ENCODE measurements at regions of chr2 and their contacts with region 1.

Region 1: GRCh38 chr2:135004005-135004746 is 43.1 kb downstream of the MAP3K19 start:
- DNase-seq: peak; percentile 85
- ATAC-seq: peak; percentile 99
- H3K4me3 ChIP-seq: no peak overlapping the region
- H3K27ac ChIP-seq: no peak overlapping the region
- H3K4me1 ChIP-seq: peaks cover 7% of the 10 kb centered on the region
- H3K27me3 ChIP-seq: peaks cover 9% of the 10 kb centered on the region
- CTCF ChIP-seq: peak; percentile 94

Region 2: GRCh38 chr2:134943540-134943939 is 60.6 kb before region 1 on chr2:
- intact Hi-C with region 1: no loop called
- DNase-seq: no peak
- ATAC-seq: peak; percentile 43
- H3K4me3 ChIP-seq: no peak overlapping the region
- H3K27ac ChIP-seq: no peak overlapping the region
- H3K4me1 ChIP-seq: no peaks in the 10 kb centered on the region
- H3K27me3 ChIP-seq: no peaks in the 10 kb centered on the region
- CTCF ChIP-seq: no peak

Region 3: DNA sequence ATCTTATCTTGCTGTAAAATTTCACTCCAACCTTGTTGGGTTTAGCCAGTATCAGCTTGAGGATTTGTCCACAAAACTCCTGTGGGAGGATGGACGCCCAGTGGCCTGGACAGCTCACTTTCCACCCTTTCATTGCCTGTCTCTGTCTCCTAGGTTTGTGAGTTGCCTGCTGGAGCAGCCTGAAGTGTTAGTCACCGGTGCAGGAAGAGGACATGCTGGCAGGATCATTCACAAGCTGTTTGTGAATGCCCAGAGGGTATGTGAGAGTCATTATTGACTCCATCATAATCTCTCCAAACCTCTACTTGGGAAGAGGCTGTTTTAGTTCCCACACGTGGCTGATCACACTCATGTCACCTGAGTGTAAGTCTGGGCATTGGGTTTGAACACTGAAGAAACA is 160.3 kb after region 1 on chr2:
- intact Hi-C with region 1: no loop called
- DNase-seq: no peak
- ATAC-seq: no peak
- H3K4me3 ChIP-seq: no peak overlapping the region
- H3K27ac ChIP-seq: no peak overlapping the region
- H3K4me1 ChIP-seq: no peaks in the 10 kb centered on the region
- H3K27me3 ChIP-seq: no peaks in the 10 kb centered on the region
- CTCF ChIP-seq: no peak

Region 4: GRCh38 chr2:135709992-135710391 is 705.8 kb after region 1 on chr2:
- intact Hi-C with region 1: loop called (anchors 10 kb)
- DNase-seq: no peak
- ATAC-seq: peak; percentile 85
- H3K4me3 ChIP-seq: no peak overlapping the region
- H3K27ac ChIP-seq: no peak overlapping the region
- H3K4me1 ChIP-seq: no peaks in the 10 kb centered on the region
- H3K27me3 ChIP-seq: no peaks in the 10 kb centered on the region
- CTCF ChIP-seq: peak; percentile 96